ENCODE measurements at regions of chr15 and their contacts with region 1.

Region 1: DNA sequence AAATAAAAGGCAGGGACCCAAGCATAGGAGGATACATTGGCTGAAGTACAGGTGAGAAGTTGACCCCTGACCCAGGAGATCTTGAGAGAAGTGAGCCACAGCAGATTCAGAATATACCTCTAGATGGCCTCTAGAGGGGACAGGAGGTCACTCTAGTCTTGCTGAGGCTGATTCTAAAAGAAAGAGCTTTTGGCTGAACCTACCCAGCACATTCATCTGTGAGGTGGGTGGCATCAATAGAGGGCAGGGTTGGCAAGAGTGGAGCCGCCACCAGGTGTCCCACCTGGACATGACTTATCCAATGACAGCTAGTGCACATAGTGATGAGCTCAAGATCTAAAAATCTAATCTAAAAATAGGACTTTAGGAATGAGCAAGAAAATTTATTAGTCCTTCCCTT is 51.6 kb downstream of the CYP19A1 start:
- DNase-seq: no peak
- ATAC-seq: peak; percentile 74
- H3K4me3 Mint-ChIP-seq: no peak overlapping the region
- H3K27ac Mint-ChIP-seq: no peak overlapping the region
- H3K4me1 Mint-ChIP-seq: no peaks in the 10 kb centered on the region
- H3K27me3 Mint-ChIP-seq: no peaks in the 10 kb centered on the region; the same call in 1 of the 2 replicates
- CTCF ChIP-seq: no peak

Region 2: GRCh38 chr15:51267703-51268083 is 19.1 kb before region 1 on chr15:
- CTCF ChIA-PET with region 1: interaction called, 11 read pairs
- POLR2A ChIA-PET with region 1: interaction called, 4 read pairs
- DNase-seq: peak; percentile 29
- ATAC-seq: peak; percentile 69
- H3K4me3 Mint-ChIP-seq: peak overlapping the region; percentile 69
- H3K27ac Mint-ChIP-seq: no peak overlapping the region
- H3K4me1 Mint-ChIP-seq: peaks cover 9% of the 10 kb centered on the region
- H3K27me3 Mint-ChIP-seq: peaks cover 4% of the 10 kb centered on the region
- CTCF ChIP-seq: no peak

Region 3: DNA sequence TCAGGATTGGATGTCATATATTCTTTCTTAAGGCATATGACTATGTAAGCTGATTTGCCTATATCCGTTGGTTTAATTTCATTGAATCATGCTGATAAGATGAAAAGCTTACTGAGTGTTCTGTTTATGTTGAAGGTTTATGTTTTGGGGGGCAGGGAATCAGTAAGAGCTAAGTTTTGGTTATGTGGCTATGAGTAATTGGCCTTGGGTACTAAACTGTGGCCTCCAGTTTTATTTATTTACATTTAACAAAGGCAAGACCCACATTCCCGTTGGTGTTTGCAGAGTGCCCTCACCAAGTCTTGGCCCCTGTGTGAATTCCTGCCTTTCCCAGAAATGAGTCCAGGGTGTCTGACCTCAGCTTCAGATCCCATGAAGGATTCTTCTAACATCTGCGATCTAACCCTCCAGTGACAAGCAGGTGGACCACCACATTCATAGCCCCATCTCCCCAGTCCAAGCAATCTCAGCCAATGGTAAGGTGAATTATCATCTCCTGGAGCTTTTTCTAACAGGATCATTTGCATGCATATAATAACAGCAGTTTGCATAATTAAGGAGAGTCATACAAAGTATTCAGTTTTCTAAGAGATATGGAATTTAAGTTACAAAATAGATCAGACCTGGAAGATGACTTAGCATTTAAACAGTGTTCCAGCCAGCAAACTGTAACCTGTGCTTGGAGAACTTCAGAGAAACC is 82.1 kb after region 1 on chr15:
- CTCF ChIA-PET with region 1: interaction called, 10 read pairs
- POLR2A ChIA-PET with region 1: no interaction called
- DNase-seq: no peak
- ATAC-seq: no peak
- H3K4me3 Mint-ChIP-seq: no peak overlapping the region
- H3K27ac Mint-ChIP-seq: no peak overlapping the region
- H3K4me1 Mint-ChIP-seq: peaks cover 4% of the 10 kb centered on the region; the same call in 1 of the 2 replicates
- H3K27me3 Mint-ChIP-seq: no peaks in the 10 kb centered on the region
- CTCF ChIP-seq: no peak